ENCODE measurements at regions of chr6 and their contacts with region 1.

Region 1: GRCh38 chr6:100116411-100117194 is 122.6 kb upstream of the MCHR2 start:
- DNase-seq: peak; percentile 23
- H3K4me3 ChIP-seq: no peak overlapping the region; a peak in 1 of 4 replicates
- H3K27ac ChIP-seq: no peak overlapping the region
- H3K4me1 ChIP-seq: no peaks in the 10 kb centered on the region
- H3K27me3 ChIP-seq: peaks cover 40% of the 10 kb centered on the region
- CTCF ChIP-seq: peak; percentile 88
- EP300 ChIP-seq: no peak
- RAD21 ChIP-seq: peak; percentile 80

Region 2: DNA sequence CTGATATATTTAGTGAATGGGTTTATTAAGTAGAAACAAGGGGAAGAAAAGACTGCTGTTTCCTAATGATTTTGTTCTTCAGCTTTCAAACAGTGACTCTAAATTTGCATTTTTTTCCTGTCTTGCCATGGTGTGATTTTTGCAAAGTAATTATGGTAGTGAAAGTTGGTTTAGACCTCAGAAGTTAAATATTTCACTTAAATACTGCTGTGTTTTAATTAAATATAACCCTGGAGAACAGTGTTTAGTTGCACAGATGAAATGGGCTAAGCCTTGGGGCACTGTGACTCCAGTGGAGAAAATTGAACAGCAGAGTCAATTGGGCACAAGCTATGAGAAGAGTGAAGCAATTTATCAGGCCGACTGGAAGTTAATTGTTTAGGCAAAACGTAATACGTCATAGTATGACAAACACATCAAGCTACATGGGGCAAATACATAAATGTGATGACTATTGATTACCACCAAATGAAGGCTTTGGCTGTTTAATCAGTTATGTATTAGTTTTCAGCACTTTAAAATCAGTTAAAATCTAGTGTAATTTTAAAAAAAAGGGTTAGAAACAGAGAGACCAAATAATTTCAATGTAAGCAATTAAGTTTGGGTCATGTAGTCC is 11.4 kb before region 1 on chr6:
- CTCF ChIA-PET with region 1: interaction called, 12 read pairs
- POLR2A ChIA-PET with region 1: interaction called, 4 read pairs
- DNase-seq: no peak
- H3K4me3 ChIP-seq: no peak overlapping the region
- H3K27ac ChIP-seq: no peak overlapping the region
- H3K4me1 ChIP-seq: no peaks in the 10 kb centered on the region
- H3K27me3 ChIP-seq: peaks cover 42% of the 10 kb centered on the region
- CTCF ChIP-seq: no peak
- EP300 ChIP-seq: no peak
- RAD21 ChIP-seq: no peak

Region 3: DNA sequence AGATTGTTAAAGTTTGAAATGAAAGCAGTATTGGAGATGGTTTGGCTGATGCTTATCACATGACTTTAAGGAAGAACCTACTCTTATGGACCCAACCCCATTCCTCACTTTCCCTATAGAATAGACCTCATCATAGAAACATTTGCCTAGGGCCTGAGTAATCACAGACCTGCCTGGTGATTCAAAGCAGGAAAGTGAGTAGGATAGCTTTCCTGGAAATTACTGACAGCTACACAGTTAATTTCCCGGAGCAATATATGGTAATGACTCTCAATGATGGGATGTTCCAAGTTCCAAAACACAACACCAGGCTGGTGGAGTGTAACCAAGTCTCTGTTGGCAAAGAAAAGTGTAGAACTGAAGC is 114.3 kb after region 1 on chr6:
- CTCF ChIA-PET with region 1: no interaction called
- POLR2A ChIA-PET with region 1: no interaction called
- DNase-seq: no peak
- H3K4me3 ChIP-seq: no peak overlapping the region
- H3K27ac ChIP-seq: no peak overlapping the region
- H3K4me1 ChIP-seq: peaks cover 0 to 5% of the 10 kb centered on the region in 2 experiments; a peak in 3 of 4 replicates
- H3K27me3 ChIP-seq: no peaks in the 10 kb centered on the region
- CTCF ChIP-seq: no peak
- EP300 ChIP-seq: no peak
- RAD21 ChIP-seq: no peak

Region 4: DNA sequence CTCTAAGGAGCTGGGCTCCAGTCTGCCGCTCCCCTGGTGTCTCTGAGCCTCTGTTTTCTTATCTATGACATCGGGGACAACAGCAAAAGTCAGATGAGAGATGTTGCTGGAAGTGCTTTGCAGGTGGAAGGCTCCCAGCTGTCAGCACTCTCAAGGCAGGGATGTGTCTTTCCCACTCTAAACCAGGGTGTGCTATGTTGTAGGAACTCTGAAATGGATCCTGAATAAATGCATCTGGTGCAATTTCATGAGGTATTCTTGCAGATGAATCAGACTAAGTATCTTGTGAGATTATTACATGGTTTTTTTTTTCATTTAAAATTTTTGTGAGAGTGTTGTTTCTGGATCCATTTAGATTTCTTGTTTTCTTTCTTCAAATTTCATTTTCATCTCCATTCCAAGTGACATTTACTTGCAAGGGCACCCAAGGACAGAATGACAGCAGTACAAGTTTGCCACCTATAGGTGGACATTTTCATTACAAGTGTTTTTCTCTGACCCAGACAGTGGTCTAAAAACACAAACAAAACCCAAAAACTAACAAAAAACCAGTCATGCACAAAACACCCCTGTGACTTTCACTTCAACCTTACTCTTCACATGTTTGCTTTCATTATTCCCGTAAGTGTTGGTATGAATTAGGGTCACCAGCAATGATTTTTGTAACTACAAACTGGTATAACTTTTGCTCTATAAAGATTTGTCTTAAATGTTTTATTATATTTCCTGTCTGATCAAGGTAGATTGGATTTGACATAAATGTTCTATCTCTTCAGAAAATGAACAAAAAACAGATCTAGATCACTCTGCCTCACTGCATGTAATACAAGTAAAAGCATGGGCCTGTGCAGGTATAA is 362.8 kb after region 1 on chr6:
- CTCF ChIA-PET with region 1: interaction called, 11 read pairs
- POLR2A ChIA-PET with region 1: no interaction called
- DNase-seq: no peak
- H3K4me3 ChIP-seq: no peak overlapping the region
- H3K27ac ChIP-seq: no peak overlapping the region
- H3K4me1 ChIP-seq: no peaks in the 10 kb centered on the region
- H3K27me3 ChIP-seq: peaks cover 17% of the 10 kb centered on the region; the same call in 1 of the 2 replicates
- CTCF ChIP-seq: peak; percentile 91
- EP300 ChIP-seq: no peak
- RAD21 ChIP-seq: peak; percentile 87